ENCODE measurements at regions of chrX and their contacts with region 1.

Region 1: DNA sequence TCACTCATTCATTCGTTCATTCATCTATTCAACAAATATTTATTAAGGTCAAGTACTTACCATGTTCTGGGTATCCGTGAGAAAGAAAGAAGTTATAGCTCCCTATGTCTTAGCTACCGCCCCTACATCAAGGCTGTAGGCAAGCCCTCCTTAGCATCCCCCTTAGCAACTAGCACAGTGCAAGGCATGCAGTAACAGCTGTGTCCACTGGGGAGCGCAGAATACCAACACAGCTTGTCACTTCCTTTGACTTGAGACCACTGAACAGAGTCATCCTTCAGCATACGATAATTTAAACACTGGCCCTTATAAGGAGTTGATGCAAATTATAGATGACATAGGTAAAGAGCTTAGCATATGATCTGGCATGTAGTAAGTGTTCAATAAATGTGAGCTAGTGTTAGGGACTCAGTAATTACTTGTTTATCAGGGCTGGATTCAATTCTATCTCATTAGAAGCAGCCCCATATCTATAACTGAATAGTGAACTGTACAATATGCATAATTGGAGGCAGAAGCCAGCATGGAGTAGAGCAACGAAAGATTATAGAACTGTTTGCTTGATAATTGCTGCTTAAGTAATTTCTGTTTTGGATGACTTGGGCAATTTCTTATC is 8.7 kb downstream of the KIAA1210 start:
- DNase-seq: peak; percentile 36
- ATAC-seq: peak; percentile 96
- H3K4me3 ChIP-seq: no peak overlapping the region
- H3K27ac ChIP-seq: no peak overlapping the region
- H3K4me1 ChIP-seq: no peaks in the 10 kb centered on the region
- H3K27me3 ChIP-seq: peaks cover 19% of the 10 kb centered on the region
- CTCF ChIP-seq: peak; percentile 83

Region 2: GRCh38 chrX:118862091-118862490 is 256.8 kb before region 1 on chrX:
- CTCF ChIA-PET with region 1: no interaction called
- POLR2A ChIA-PET with region 1: no interaction called
- in situ Hi-C with region 1: no loop called
- intact Hi-C with region 1: no loop called
- DNase-seq: no peak
- ATAC-seq: no peak
- H3K4me3 ChIP-seq: no peak overlapping the region
- H3K27ac ChIP-seq: no peak overlapping the region
- H3K4me1 ChIP-seq: no peaks in the 10 kb centered on the region
- H3K27me3 ChIP-seq: no peaks in the 10 kb centered on the region; the same call in 1 of the 2 replicates
- CTCF ChIP-seq: no peak

Region 3: DNA sequence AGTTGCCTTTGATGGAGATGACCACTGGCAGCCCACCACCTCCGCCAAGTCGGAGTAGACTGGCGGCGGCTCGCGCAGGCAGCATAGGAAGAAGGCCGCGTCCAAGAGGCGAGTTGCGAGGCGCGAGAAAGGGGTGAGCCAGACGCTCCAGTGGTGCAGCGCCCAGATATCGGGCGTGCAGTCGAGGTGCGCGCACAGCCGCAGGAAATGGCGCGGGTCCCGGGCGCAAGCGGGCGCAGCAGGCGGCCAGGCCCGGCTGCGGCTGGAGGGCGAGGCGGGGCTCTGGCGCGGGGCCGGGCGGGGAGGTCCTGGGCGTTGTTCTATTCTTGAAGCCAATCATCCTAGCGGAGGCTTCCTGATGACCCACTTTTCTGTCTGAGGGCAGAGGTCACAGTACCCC is 104.0 kb after region 1 on chrX:
- CTCF ChIA-PET with region 1: no interaction called
- POLR2A ChIA-PET with region 1: no interaction called
- in situ Hi-C with region 1: no loop called
- intact Hi-C with region 1: loop called (anchors 1 kb)
- DNase-seq: no peak
- ATAC-seq: no peak
- H3K4me3 ChIP-seq: no peak overlapping the region
- H3K27ac ChIP-seq: no peak overlapping the region
- H3K4me1 ChIP-seq: no peaks in the 10 kb centered on the region
- H3K27me3 ChIP-seq: 0 out of 2 replicates have a peak, but pooled peaks cover 4% of the 10 kb centered on the region
- CTCF ChIP-seq: no peak

Region 4: DNA sequence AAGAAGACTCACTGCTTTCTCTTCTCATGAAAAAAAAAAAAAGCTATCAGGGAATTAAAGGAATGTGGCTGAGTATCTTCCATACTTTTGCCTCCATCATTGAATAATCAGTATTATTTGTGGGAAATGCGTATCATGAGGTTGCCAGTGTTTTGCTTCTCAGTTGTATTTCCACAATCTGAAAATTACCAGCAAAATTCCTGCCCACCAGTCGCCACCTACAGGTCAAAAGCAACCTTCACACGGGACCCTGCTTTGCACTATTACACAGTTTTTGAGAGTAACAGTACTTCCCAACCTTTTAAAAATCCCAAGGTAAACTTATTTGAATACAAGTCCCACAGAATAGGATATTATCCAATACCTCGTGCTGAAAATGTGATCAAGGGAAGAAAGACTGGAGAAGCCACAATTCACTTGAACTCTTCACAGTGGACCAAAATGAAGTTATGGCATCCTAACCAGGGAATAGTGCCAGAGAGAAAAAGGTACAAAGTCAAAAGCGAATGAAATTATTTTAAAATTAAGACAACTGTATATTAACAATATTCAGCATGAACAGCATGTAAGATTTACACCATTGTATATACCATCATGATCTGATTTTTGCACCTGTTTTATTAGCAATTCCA is 147.6 kb after region 1 on chrX:
- CTCF ChIA-PET with region 1: interaction called, 10 read pairs
- POLR2A ChIA-PET with region 1: no interaction called
- in situ Hi-C with region 1: no loop called
- intact Hi-C with region 1: no loop called
- DNase-seq: peak; percentile 18
- ATAC-seq: peak; percentile 88
- H3K4me3 ChIP-seq: no peak overlapping the region
- H3K27ac ChIP-seq: no peak overlapping the region
- H3K4me1 ChIP-seq: no peaks in the 10 kb centered on the region
- H3K27me3 ChIP-seq: peaks cover 7% of the 10 kb centered on the region
- CTCF ChIP-seq: peak; percentile 86

Region 5: GRCh38 chrX:120457766-120458180 is 1338.9 kb after region 1 on chrX:
- CTCF ChIA-PET with region 1: no interaction called
- POLR2A ChIA-PET with region 1: interaction called, 12 read pairs
- in situ Hi-C with region 1: no loop called
- intact Hi-C with region 1: no loop called
- DNase-seq: peak; percentile 5
- ATAC-seq: peak; percentile 75
- H3K4me3 ChIP-seq: no peak overlapping the region
- H3K27ac ChIP-seq: no peak overlapping the region
- H3K4me1 ChIP-seq: peaks cover 12% of the 10 kb centered on the region; the same call in 1 of the 2 replicates
- H3K27me3 ChIP-seq: no peaks in the 10 kb centered on the region
- CTCF ChIP-seq: no peak

Measured in Panc1 (cell line).